ENCODE measurements at regions of chr6 and their contacts with region 1.

Region 1: GRCh38 chr6:73653571-73654424 is at the start of gene SLC17A5:
- DNase-seq: peak; percentile 91
- ATAC-seq: peak; percentile 95
- H3K4me3 ChIP-seq: peak within 1 kb of the TSS; percentile 84 to 98 (median 86)
- H3K27ac ChIP-seq: peak within 1 kb of the TSS; percentile 96
- H3K4me1 ChIP-seq: peaks cover 28% of the 10 kb centered on the region
- H3K27me3 ChIP-seq: no peaks in the 10 kb centered on the region; a peak in 1 of 5 replicates
- CTCF ChIP-seq: no peak
- EP300 ChIP-seq: 0 out of 4 replicates have a peak, but pooled peaks of 1 of the 2 experiments have one; percentile 29
- POLR2A ChIP-seq: peak; percentile 68 to 87
- RAD21 ChIP-seq: 0 out of 2 replicates have a peak, but pooled peaks have one; percentile 4
- total RNA-seq, gene SLC17A5: 13.6 and 20.5 TPM in 2 replicates

Region 2: DNA sequence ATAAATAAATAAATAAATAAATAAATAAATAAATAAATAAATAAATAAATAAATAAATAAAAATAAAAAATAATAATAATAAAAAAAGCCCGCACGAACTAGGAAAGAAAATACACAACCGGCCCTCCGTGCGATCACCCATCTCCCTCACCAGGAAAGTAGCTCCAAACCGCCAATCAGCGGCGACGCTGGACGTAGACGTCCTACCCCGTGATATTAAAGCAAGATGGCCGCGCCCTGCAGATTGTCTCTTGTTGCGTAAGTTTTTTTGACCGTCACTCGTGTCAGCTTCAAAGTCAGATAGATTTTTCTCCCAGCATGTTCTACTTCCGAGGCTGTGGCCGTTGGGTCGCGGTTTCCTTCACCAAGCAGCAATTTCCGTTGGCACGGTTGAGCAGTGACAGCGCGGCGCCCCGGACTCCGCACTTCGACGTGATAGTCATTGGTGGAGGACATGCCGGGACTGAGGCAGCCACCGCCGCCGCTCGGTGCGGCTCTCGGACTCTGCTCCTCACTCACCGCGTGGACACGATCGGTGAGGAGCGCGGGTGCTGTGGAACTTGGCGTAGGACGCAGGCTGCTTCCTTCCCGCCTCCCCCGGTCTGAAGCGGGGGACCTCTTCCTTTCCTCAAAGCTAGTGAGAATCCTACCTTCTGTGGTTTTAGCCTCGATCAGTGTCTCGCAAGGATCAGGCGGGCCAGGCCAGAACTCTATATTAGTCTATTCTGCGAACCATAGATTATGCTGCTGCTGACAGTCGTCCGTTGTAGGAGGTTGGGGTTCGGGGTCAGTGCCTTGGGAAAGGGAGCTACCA is 192.1 kb before region 1 on chr6 and contains the start of gene MTO1:
- CTCF ChIA-PET with region 1: no interaction called
- POLR2A ChIA-PET with region 1: interaction called, 38 read pairs
- in situ Hi-C with region 1: no loop called
- intact Hi-C with region 1: loop called (anchors 2 kb)
- DNase-seq: peak; percentile 89
- ATAC-seq: peak; percentile 96
- H3K4me3 ChIP-seq: peak within 1 kb of the TSS; percentile 94 to 99 (median 99)
- H3K27ac ChIP-seq: peak within 1 kb of the TSS; percentile 88
- H3K4me1 ChIP-seq: peaks cover 24% of the 10 kb centered on the region
- H3K27me3 ChIP-seq: no peaks in the 10 kb centered on the region; a peak in 1 of 5 replicates
- CTCF ChIP-seq: no peak
- EP300 ChIP-seq: 0 out of 4 replicates have a peak, but pooled peaks of 1 of the 2 experiments have one; percentile 20
- POLR2A ChIP-seq: peak; percentile 74 to 81
- RAD21 ChIP-seq: no peak
- total RNA-seq, gene MTO1: 31.9 and 45.3 TPM in 2 replicates

Region 3: DNA sequence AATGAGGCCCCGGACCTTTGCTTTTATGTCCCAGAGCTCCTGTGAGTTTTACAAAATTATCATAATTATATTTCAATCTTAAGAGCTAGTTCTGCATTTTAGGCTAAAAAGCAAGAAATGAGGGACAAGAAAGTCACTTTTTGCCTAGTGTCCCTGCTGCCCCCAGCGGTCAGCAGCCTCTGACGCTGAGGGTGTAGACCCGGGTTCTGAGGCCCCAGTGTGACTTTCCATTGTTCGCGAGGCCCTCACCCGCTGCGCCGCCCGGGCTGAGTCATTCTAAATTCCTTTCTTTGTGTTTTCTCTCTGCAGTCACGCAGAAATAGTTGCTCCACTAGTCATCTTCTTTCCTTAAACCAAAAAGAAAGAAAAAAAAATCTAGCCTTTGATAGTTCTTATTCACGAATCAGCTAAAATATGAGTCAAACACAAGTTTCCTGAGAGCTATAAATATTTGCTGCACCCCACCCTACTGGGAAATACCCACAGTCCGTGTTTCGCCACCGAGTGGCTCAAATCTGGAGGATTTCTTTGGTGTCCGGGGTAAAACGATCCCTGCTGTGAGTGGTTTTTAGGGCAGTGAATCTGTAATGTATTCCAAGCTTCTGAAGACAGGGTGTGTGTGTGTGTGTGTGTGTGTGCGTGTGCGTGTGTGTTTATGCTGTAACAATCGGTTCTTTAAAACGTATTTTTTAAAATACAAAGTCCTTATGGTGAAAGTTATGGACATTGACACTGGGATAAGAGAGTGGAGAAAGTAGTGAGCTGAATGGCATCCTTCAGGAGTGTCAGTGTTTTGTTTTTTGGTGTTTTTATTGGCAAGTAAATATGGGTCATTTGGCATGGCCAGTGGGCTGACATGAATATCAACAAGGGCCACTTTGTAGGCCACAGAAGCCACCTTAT is 73.3 kb before region 1 on chr6:
- CTCF ChIA-PET with region 1: no interaction called
- POLR2A ChIA-PET with region 1: interaction called, 15 read pairs
- in situ Hi-C with region 1: no loop called
- intact Hi-C with region 1: no loop called
- DNase-seq: peak; percentile 93
- ATAC-seq: peak; percentile 96
- H3K4me3 ChIP-seq: peak overlapping the region; percentile 45 to 67 (median 63)
- H3K27ac ChIP-seq: peak overlapping the region; percentile 99
- H3K4me1 ChIP-seq: peaks cover 50% of the 10 kb centered on the region
- H3K27me3 ChIP-seq: no peaks in the 10 kb centered on the region; a peak in 1 of 5 replicates
- CTCF ChIP-seq: peak; percentile 70
- EP300 ChIP-seq: peak in 1 of 2 experiments; percentile 83; a peak in 1 of 4 replicates
- POLR2A ChIP-seq: 0 out of 4 replicates have a peak, but pooled peaks of 1 of the 2 experiments have one; percentile 30
- RAD21 ChIP-seq: peak; percentile 55; the same call in 1 of the 2 replicates

Region 4: GRCh38 chr6:74534465-74535211 is 880.8 kb after region 1 on chr6:
- CTCF ChIA-PET with region 1: no interaction called
- POLR2A ChIA-PET with region 1: no interaction called
- in situ Hi-C with region 1: no loop called
- intact Hi-C with region 1: loop called (anchors 10 kb)
- DNase-seq: peak; percentile 99
- ATAC-seq: peak; percentile 100
- H3K4me3 ChIP-seq: peak overlapping the region in 2 of 3 experiments; percentile 27 to 48; a peak in 4 of 6 replicates
- H3K27ac ChIP-seq: peak overlapping the region; percentile 95
- H3K4me1 ChIP-seq: peaks cover 40% of the 10 kb centered on the region
- H3K27me3 ChIP-seq: no peaks in the 10 kb centered on the region
- CTCF ChIP-seq: 0 out of 2 replicates have a peak, but pooled peaks have one; percentile 19
- EP300 ChIP-seq: peak; percentile 92 to 97
- POLR2A ChIP-seq: peak in 1 of 2 experiments; percentile 43; a peak in 1 of 4 replicates
- RAD21 ChIP-seq: peak; percentile 35; the same call in 1 of the 2 replicates